Naive thymus-derived CD4-positive, alpha-beta T cell (primary cell): ENCODE measurements at regions of chr9 and their contacts with region 1.

Region 1: DNA sequence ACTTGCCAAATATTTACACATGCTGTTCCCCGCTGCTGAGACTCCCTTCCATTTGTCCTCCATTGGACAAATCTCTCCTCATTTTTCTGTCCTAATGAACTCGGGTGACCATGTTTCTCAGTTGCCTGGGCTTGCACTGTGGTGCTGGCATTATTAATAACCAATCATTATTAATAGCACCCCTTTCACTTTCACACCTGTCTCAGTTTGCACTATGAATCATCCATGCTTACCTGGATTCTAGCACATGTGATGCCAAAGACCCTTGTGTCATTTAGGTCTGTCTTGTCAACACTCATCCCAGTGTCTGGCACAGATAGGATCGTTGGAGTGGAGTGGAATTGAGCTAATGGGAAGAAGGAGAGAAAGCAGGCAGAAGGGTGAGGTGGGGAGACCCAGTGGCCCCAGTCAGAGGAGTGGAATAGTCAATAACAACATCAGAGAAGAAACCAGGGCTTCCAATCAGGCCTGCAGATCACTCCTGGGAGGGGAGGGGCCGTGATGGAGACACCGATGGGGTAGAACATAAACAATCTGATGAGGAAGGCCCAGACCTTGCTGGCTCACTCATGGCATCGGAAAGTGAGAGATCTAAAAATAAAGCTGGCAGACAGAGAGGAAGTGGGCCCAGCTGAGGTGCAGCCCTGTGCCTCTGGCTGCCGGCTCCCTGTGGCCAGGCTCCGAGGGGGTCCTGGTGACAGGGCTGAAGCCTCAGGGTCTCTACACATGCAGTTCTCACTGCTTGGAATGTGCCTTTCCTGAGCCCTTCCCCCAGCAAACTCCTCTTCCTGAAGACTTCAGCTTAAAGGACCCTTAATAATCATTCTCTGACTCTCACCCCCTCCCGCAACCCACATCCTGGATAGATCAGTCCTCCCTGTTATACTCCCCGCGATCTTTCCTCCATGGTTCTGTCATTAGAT is 33.5 kb upstream of the CRB2 start:
- DNase-seq: peak; percentile 33 to 90 (median 83)
- ATAC-seq: peak; percentile 88
- H3K4me3 ChIP-seq: peak overlapping the region; percentile 37
- H3K4me3 Mint-ChIP-seq: peak overlapping the region; percentile 59 to 85 (median 74)
- H3K27ac ChIP-seq: peak overlapping the region; percentile 70
- H3K27ac Mint-ChIP-seq: peak overlapping the region; percentile 83 to 99 (median 94)
- H3K4me1 ChIP-seq: peaks cover 20 to 33% of the 10 kb centered on the region in 2 donors
- H3K4me1 Mint-ChIP-seq: peaks cover 24 to 56% (median 41%) of the 10 kb centered on the region in 7 donors
- H3K27me3 ChIP-seq: no peaks in the 10 kb centered on the region
- H3K27me3 Mint-ChIP-seq: no peaks in the 10 kb centered on the region

Region 2: GRCh38 chr9:123102375-123103110 is 220.0 kb before region 1 on chr9:
- CTCF ChIA-PET with region 1: no interaction called
- POLR2A ChIA-PET with region 1: no interaction called
- intact Hi-C with region 1: no loop called
- DNase-seq: no peak
- ATAC-seq: no peak
- H3K4me3 ChIP-seq: no peak overlapping the region
- H3K4me3 Mint-ChIP-seq: no peak overlapping the region
- H3K27ac ChIP-seq: no peak overlapping the region
- H3K27ac Mint-ChIP-seq: peak overlapping the region in 5 of 9 donors; percentile 9 to 68 (median 52)
- H3K4me1 ChIP-seq: no peaks in the 10 kb centered on the region
- H3K4me1 Mint-ChIP-seq: no peaks in the 10 kb centered on the region
- H3K27me3 ChIP-seq: no peaks in the 10 kb centered on the region
- H3K27me3 Mint-ChIP-seq: no peaks in the 10 kb centered on the region

Region 3: DNA sequence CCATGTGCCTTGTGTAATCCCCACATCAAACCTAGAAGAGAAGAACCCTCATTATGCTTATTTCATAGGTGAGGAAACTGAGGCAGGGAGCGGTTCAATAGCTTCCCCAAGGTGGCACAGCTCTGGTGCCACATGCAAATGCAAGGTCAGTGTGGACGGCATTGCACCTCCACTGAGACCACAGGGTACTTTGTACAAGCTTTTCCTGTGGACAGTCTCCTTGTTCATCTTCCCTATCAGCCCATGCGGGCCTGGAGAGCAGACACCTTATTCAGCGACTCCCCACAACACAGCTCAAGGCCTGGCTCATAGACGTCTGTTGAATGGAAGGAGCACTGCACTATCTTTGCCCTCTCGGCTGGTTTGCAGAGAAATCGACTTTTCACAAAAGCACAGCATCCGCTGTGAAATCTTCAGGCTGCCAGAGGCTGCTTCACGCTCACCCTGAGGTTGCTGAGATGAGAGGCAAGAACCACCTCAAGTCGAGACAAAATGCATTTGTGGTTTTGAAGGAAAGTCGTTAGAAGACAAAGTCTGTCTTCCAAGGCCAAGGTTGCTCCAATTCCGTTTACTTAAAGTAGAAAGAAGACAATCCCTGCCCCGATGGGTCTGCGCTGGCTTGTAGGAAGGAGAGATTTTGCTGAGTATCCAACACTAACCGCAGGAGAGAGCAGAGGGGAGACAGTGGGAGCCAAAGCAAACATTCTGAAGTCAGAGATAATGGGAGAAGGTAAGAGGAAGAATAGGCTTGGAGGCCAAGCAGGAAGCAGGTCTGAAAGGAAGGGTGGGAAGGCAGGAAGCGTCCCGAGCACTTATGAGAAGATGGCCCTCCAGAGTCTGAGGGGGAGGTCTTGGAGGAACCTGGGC is 20.0 kb before region 1 on chr9:
- CTCF ChIA-PET with region 1: no interaction called
- POLR2A ChIA-PET with region 1: interaction called, 6 read pairs
- intact Hi-C with region 1: loop called in 1 of 2 experiments (anchors 1 kb)
- DNase-seq: peak in 7 of 9 donors; percentile 16 to 51 (median 41)
- ATAC-seq: peak; percentile 30
- H3K4me3 ChIP-seq: peak overlapping the region; percentile 21
- H3K4me3 Mint-ChIP-seq: peak overlapping the region; percentile 9 to 78 (median 68)
- H3K27ac ChIP-seq: peak overlapping the region; percentile 55
- H3K27ac Mint-ChIP-seq: peak overlapping the region; percentile 63 to 98 (median 89)
- H3K4me1 ChIP-seq: peaks cover 16 to 35% of the 10 kb centered on the region in 2 donors
- H3K4me1 Mint-ChIP-seq: peaks cover 29 to 72% (median 69%) of the 10 kb centered on the region in 7 donors
- H3K27me3 ChIP-seq: no peaks in the 10 kb centered on the region
- H3K27me3 Mint-ChIP-seq: no peaks in the 10 kb centered on the region